ENCODE measurements at regions of chr1 and their contacts with region 1.

Region 1: GRCh38 chr1:77817368-77818209 is 38.1 kb downstream of the MIGA1 start:
- DNase-seq: no peak
- ATAC-seq: no peak
- H3K4me3 ChIP-seq: no peak overlapping the region
- H3K4me3 Mint-ChIP-seq: no peak overlapping the region
- H3K27ac ChIP-seq: no peak overlapping the region
- H3K27ac Mint-ChIP-seq: no peak overlapping the region
- H3K4me1 ChIP-seq: no peaks in the 10 kb centered on the region
- H3K4me1 Mint-ChIP-seq: no peaks in the 10 kb centered on the region
- H3K27me3 ChIP-seq: no peaks in the 10 kb centered on the region
- H3K27me3 Mint-ChIP-seq: no peaks in the 10 kb centered on the region

Region 2: GRCh38 chr1:77706321-77706720 is 111.3 kb before region 1 on chr1:
- CTCF ChIA-PET with region 1: no interaction called
- POLR2A ChIA-PET with region 1: no interaction called
- DNase-seq: no peak
- ATAC-seq: no peak
- H3K4me3 ChIP-seq: no peak overlapping the region
- H3K4me3 Mint-ChIP-seq: no peak overlapping the region
- H3K27ac ChIP-seq: no peak overlapping the region
- H3K27ac Mint-ChIP-seq: no peak overlapping the region
- H3K4me1 ChIP-seq: no peaks in the 10 kb centered on the region
- H3K4me1 Mint-ChIP-seq: no peaks in the 10 kb centered on the region
- H3K27me3 ChIP-seq: no peaks in the 10 kb centered on the region
- H3K27me3 Mint-ChIP-seq: no peaks in the 10 kb centered on the region

Region 3: DNA sequence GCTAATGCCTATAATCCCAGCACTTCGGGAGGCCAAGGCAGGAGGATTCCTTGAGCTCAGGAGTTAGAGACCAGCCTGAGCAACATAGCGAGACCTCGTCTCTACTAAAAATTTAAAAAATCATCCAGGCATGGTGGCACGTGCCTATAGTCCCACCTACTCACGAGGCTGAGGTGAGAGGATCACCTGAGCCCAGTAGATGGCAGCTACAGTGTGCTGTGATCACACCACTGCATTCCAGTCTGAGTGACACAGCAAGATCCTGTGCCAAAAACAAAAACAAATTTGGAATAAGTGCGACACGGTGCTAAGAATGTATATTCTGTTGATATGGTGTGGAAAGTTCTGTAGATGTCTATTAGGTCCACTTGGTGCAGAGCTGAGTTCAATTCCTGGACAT is 73.0 kb before region 1 on chr1:
- CTCF ChIA-PET with region 1: no interaction called
- POLR2A ChIA-PET with region 1: no interaction called
- DNase-seq: no peak
- ATAC-seq: no peak
- H3K4me3 ChIP-seq: no peak overlapping the region
- H3K4me3 Mint-ChIP-seq: no peak overlapping the region
- H3K27ac ChIP-seq: no peak overlapping the region
- H3K27ac Mint-ChIP-seq: no peak overlapping the region
- H3K4me1 ChIP-seq: peaks cover 0 to 7% of the 10 kb centered on the region in 2 experiments
- H3K4me1 Mint-ChIP-seq: peaks cover 53 to 68% (median 61%) of the 10 kb centered on the region in 3 donors
- H3K27me3 ChIP-seq: no peaks in the 10 kb centered on the region
- H3K27me3 Mint-ChIP-seq: no peaks in the 10 kb centered on the region

Region 4: DNA sequence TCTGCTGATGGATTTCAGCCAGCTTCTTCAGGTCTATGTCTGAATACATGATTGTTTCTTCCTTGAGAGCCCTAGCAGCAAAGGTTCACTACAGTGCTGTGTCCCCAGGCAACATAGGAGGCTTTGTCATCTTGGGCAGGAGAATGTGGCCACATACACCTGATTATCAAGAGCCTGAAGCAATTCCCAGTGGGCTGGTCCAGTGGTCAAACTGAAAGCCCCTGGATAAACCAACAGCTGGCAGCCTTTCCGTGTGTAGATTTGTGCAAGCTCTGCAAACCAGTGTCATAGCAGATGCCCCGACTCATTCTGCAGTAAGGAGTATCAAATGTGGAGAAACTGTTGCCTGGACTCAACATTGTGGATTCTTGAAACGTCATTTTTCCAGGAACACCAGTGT is 225.8 kb after region 1 on chr1:
- CTCF ChIA-PET with region 1: interaction called in 1 of 2 experiments, 10 read pairs
- POLR2A ChIA-PET with region 1: no interaction called
- DNase-seq: no peak
- ATAC-seq: no peak
- H3K4me3 ChIP-seq: no peak overlapping the region
- H3K4me3 Mint-ChIP-seq: no peak overlapping the region
- H3K27ac ChIP-seq: no peak overlapping the region
- H3K27ac Mint-ChIP-seq: no peak overlapping the region
- H3K4me1 ChIP-seq: peaks cover 0 to 12% of the 10 kb centered on the region in 2 experiments
- H3K4me1 Mint-ChIP-seq: peaks cover 22 to 32% (median 30%) of the 10 kb centered on the region in 3 donors
- H3K27me3 ChIP-seq: peaks cover 10 to 17% of the 10 kb centered on the region in 2 experiments
- H3K27me3 Mint-ChIP-seq: peaks cover 35 to 39% of the 10 kb centered on the region in 2 donors